ENCODE measurements at regions of chr1 and their contacts with region 1.

Region 1: GRCh38 chr1:244801246-244801645 is 34.2 kb upstream of the COX20 start:
- DNase-seq: peak; percentile 25 to 69 (median 42)
- H3K4me3 ChIP-seq: no peak overlapping the region
- H3K4me3 Mint-ChIP-seq: peak overlapping the region in 1 of 7 donors; percentile 54
- H3K27ac ChIP-seq: no peak overlapping the region
- H3K27ac Mint-ChIP-seq: peak overlapping the region in 2 of 8 donors; percentile 22 to 73
- H3K4me1 ChIP-seq: no peaks in the 10 kb centered on the region
- H3K4me1 Mint-ChIP-seq: peaks cover 4 to 5% (median 4%) of the 10 kb centered on the region in 3 donors
- H3K27me3 ChIP-seq: no peaks in the 10 kb centered on the region
- H3K27me3 Mint-ChIP-seq: peaks cover 5 to 22% of the 10 kb centered on the region in 2 donors

Region 2: DNA sequence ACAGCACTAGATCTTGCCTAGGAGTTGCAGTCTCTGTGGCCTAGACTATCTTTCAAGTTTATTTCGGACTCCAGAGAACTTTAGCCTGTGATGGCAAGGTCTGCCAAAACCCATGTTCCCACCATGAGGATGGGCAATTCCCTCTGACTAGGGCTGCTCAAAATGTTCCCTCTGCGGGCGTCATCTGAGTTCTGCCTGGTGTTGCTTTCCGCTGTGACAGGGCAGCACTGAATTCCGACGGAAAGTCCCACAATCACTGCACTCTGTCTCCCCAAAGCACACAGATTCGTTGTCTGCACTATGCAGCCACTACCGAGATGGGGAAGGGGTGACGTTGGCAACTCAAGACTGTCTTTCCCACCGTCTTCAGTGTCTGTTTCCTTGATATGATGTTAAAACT is 264.9 kb before region 1 on chr1:
- CTCF ChIA-PET with region 1: no interaction called
- POLR2A ChIA-PET with region 1: no interaction called
- DNase-seq: no peak
- H3K4me3 ChIP-seq: no peak overlapping the region
- H3K4me3 Mint-ChIP-seq: no peak overlapping the region
- H3K27ac ChIP-seq: no peak overlapping the region
- H3K27ac Mint-ChIP-seq: no peak overlapping the region
- H3K4me1 ChIP-seq: no peaks in the 10 kb centered on the region
- H3K4me1 Mint-ChIP-seq: no peaks in the 10 kb centered on the region
- H3K27me3 ChIP-seq: no peaks in the 10 kb centered on the region
- H3K27me3 Mint-ChIP-seq: peaks cover under 1 to 4% of the 10 kb centered on the region in 2 donors

Region 3: GRCh38 chr1:244599937-244600350 is 201.3 kb before region 1 on chr1:
- CTCF ChIA-PET with region 1: interaction called, 49 read pairs
- POLR2A ChIA-PET with region 1: no interaction called
- DNase-seq: peak in 1 of 5 donors; percentile 70
- H3K4me3 ChIP-seq: no peak overlapping the region
- H3K4me3 Mint-ChIP-seq: peak overlapping the region in 2 of 7 donors; percentile 36 to 67
- H3K27ac ChIP-seq: no peak overlapping the region
- H3K27ac Mint-ChIP-seq: peak overlapping the region in 5 of 8 donors; percentile 16 to 77 (median 58)
- H3K4me1 ChIP-seq: no peaks in the 10 kb centered on the region
- H3K4me1 Mint-ChIP-seq: peaks cover 3 to 10% (median 6%) of the 10 kb centered on the region in 3 donors
- H3K27me3 ChIP-seq: no peaks in the 10 kb centered on the region
- H3K27me3 Mint-ChIP-seq: peaks cover 1 to 10% of the 10 kb centered on the region in 2 donors

Region 4: GRCh38 chr1:244700808-244701207 is 100.4 kb before region 1 on chr1:
- CTCF ChIA-PET with region 1: no interaction called
- POLR2A ChIA-PET with region 1: no interaction called
- DNase-seq: no peak
- H3K4me3 ChIP-seq: no peak overlapping the region
- H3K4me3 Mint-ChIP-seq: no peak overlapping the region
- H3K27ac ChIP-seq: no peak overlapping the region
- H3K27ac Mint-ChIP-seq: no peak overlapping the region
- H3K4me1 ChIP-seq: no peaks in the 10 kb centered on the region
- H3K4me1 Mint-ChIP-seq: no peaks in the 10 kb centered on the region
- H3K27me3 ChIP-seq: no peaks in the 10 kb centered on the region
- H3K27me3 Mint-ChIP-seq: no peaks in the 10 kb centered on the region

Region 5: GRCh38 chr1:244768186-244768585 is 33.1 kb before region 1 on chr1:
- CTCF ChIA-PET with region 1: no interaction called
- POLR2A ChIA-PET with region 1: no interaction called
- DNase-seq: no peak
- H3K4me3 ChIP-seq: no peak overlapping the region
- H3K4me3 Mint-ChIP-seq: no peak overlapping the region
- H3K27ac ChIP-seq: no peak overlapping the region
- H3K27ac Mint-ChIP-seq: peak overlapping the region in 1 of 8 donors; percentile 15
- H3K4me1 ChIP-seq: no peaks in the 10 kb centered on the region
- H3K4me1 Mint-ChIP-seq: no peaks in the 10 kb centered on the region
- H3K27me3 ChIP-seq: no peaks in the 10 kb centered on the region
- H3K27me3 Mint-ChIP-seq: peaks cover 9 to 31% of the 10 kb centered on the region in 2 donors

Region 6: GRCh38 chr1:245079021-245079609 is 277.9 kb after region 1 on chr1:
- CTCF ChIA-PET with region 1: no interaction called
- POLR2A ChIA-PET with region 1: no interaction called
- DNase-seq: no peak
- H3K4me3 ChIP-seq: no peak overlapping the region
- H3K4me3 Mint-ChIP-seq: no peak overlapping the region
- H3K27ac ChIP-seq: no peak overlapping the region
- H3K27ac Mint-ChIP-seq: no peak overlapping the region
- H3K4me1 ChIP-seq: no peaks in the 10 kb centered on the region
- H3K4me1 Mint-ChIP-seq: no peaks in the 10 kb centered on the region
- H3K27me3 ChIP-seq: peaks cover 3% of the 10 kb centered on the region
- H3K27me3 Mint-ChIP-seq: peaks cover 5% of the 10 kb centered on the region in 2 donors

Measured in CD8-positive, alpha-beta memory T cell (primary cell).